Activated naive CD4-positive, alpha-beta T cell treated with anti-CD3 and anti-CD28 coated beads for 36 hours (primary cell): ENCODE measurements at regions of chr9 and their contacts with region 1.

Region 1: GRCh38 chr9:135926402-135927194 is 19.3 kb upstream of the CAMSAP1 start:
- DNase-seq: peak; percentile 92
- H3K4me3 Mint-ChIP-seq: no peak overlapping the region
- H3K27ac Mint-ChIP-seq: peak overlapping the region; percentile 85
- H3K4me1 Mint-ChIP-seq: peaks cover 31% of the 10 kb centered on the region
- H3K27me3 Mint-ChIP-seq: no peaks in the 10 kb centered on the region

Region 2: DNA sequence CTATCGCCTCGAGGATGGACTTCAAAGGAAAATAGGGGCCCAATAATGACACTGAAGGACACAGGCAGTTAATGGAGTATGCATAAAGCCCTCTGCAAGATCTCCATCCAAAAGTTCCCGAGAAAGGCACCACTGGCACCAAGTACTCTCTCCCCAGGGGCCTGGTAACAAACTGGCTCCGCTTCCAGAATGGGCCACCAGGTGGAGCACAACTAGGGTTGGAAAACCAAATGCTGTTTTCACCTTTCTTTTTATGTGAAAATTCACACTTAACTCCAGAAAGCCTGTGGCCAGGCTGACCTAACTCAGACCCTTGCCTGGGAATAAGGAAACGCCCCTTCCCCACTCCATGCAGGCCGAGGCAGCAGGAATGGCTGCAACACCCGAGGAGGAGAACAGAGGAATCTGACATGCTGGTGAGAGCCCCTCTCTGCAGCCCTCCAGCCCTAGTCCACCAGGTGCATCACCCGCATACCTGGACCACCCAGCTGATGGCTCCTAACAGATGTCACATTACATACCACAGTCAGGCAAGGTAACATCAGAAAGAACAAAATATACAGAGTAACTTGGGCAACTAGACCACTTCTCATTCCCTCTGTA is 62.0 kb before region 1 on chr9:
- CTCF ChIA-PET with region 1: no interaction called
- intact Hi-C with region 1: loop called (anchors 1 kb)
- DNase-seq: peak; percentile 84
- H3K4me3 Mint-ChIP-seq: no peak overlapping the region
- H3K27ac Mint-ChIP-seq: no peak overlapping the region
- H3K4me1 Mint-ChIP-seq: peaks cover 21% of the 10 kb centered on the region
- H3K27me3 Mint-ChIP-seq: no peaks in the 10 kb centered on the region

Region 3: GRCh38 chr9:135887585-135888050 is 39.0 kb before region 1 on chr9:
- CTCF ChIA-PET with region 1: no interaction called
- intact Hi-C with region 1: loop called (anchors 1 kb)
- DNase-seq: peak; percentile 81
- H3K4me3 Mint-ChIP-seq: peak overlapping the region; percentile 61
- H3K27ac Mint-ChIP-seq: peak overlapping the region; percentile 54
- H3K4me1 Mint-ChIP-seq: peaks cover 60% of the 10 kb centered on the region
- H3K27me3 Mint-ChIP-seq: no peaks in the 10 kb centered on the region

Region 4: GRCh38 chr9:136160381-136160841 is 233.8 kb after region 1 on chr9:
- CTCF ChIA-PET with region 1: no interaction called
- intact Hi-C with region 1: no loop called
- DNase-seq: no peak
- H3K4me3 Mint-ChIP-seq: no peak overlapping the region
- H3K27ac Mint-ChIP-seq: no peak overlapping the region
- H3K4me1 Mint-ChIP-seq: no peaks in the 10 kb centered on the region
- H3K27me3 Mint-ChIP-seq: peaks cover 6% of the 10 kb centered on the region